ENCODE measurements at regions of chr4 and their contacts with region 1.

Region 1: GRCh38 chr4:74675673-74676279 is 118.5 kb downstream of the BTC start:
- DNase-seq: peak in 1 of 2 experiments; percentile 71
- H3K4me3 ChIP-seq: no peak overlapping the region
- H3K4me3 Mint-ChIP-seq: peak overlapping the region; percentile 8
- H3K27ac Mint-ChIP-seq: no peak overlapping the region
- H3K4me1 ChIP-seq: peaks cover 3% of the 10 kb centered on the region
- H3K4me1 Mint-ChIP-seq: peaks cover 14% of the 10 kb centered on the region
- H3K27me3 ChIP-seq: no peaks in the 10 kb centered on the region
- H3K27me3 Mint-ChIP-seq: no peaks in the 10 kb centered on the region
- CTCF ChIP-seq: peak; percentile 62 to 79

Region 2: DNA sequence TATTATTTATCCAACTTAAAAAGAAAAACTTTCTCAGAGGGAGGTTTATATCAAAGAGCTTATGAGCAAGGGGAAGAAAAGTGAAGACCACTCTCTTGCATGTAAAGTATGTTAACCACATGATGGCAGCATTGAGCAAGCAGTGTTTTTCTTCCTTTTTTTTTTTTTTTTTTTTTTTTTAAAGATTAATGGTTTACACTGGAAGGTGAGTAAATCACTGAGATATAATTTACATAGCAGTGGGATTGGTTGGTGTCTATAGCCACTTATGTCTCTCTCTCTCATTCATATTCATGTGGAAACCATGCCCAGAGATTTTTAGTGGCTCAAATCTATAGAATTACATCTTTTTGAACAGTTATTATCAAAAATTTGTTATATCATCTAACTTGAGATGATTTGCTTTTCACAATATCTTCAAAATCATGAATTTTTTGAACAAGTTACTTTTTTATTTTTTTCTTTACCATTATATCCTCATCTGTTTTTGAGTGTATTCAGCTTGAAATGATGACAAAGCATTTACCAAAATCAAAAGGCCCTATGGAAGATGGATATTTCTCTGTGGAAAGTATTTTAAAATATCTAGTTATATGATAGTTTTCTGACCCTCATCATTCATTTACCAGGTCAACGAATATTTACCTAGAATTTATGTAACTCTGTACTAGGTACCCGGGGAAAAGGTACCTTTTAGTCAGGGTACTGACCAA is 486.3 kb before region 1 on chr4:
- CTCF ChIA-PET with region 1: interaction called, 4 read pairs
- POLR2A ChIA-PET with region 1: no interaction called
- intact Hi-C with region 1: loop called (anchors 5 kb)
- DNase-seq: peak in 1 of 2 experiments; percentile 45
- H3K4me3 ChIP-seq: no peak overlapping the region
- H3K4me3 Mint-ChIP-seq: no peak overlapping the region
- H3K27ac Mint-ChIP-seq: no peak overlapping the region
- H3K4me1 ChIP-seq: no peaks in the 10 kb centered on the region; the same call in 1 of the 2 replicates
- H3K4me1 Mint-ChIP-seq: no peaks in the 10 kb centered on the region
- H3K27me3 ChIP-seq: no peaks in the 10 kb centered on the region
- H3K27me3 Mint-ChIP-seq: no peaks in the 10 kb centered on the region
- CTCF ChIP-seq: peak; percentile 59 to 64

Region 3: GRCh38 chr4:74228691-74229640 is 446.8 kb before region 1 on chr4:
- CTCF ChIA-PET with region 1: interaction called, 6 read pairs
- POLR2A ChIA-PET with region 1: no interaction called
- intact Hi-C with region 1: loop called (anchors 1 kb)
- DNase-seq: peak; percentile 77 to 83
- H3K4me3 ChIP-seq: no peak overlapping the region
- H3K4me3 Mint-ChIP-seq: no peak overlapping the region
- H3K27ac Mint-ChIP-seq: no peak overlapping the region
- H3K4me1 ChIP-seq: no peaks in the 10 kb centered on the region
- H3K4me1 Mint-ChIP-seq: no peaks in the 10 kb centered on the region
- H3K27me3 ChIP-seq: no peaks in the 10 kb centered on the region
- H3K27me3 Mint-ChIP-seq: no peaks in the 10 kb centered on the region
- CTCF ChIP-seq: peak; percentile 61 to 73

Region 4: GRCh38 chr4:74320559-74321118 is 355.1 kb before region 1 on chr4:
- CTCF ChIA-PET with region 1: interaction called, 16 read pairs
- POLR2A ChIA-PET with region 1: no interaction called
- intact Hi-C with region 1: loop called (anchors 1 kb)
- DNase-seq: peak; percentile 66 to 72
- H3K4me3 ChIP-seq: no peak overlapping the region
- H3K4me3 Mint-ChIP-seq: peak overlapping the region; percentile 1
- H3K27ac Mint-ChIP-seq: no peak overlapping the region
- H3K4me1 ChIP-seq: peaks cover 17% of the 10 kb centered on the region; the same call in 1 of the 2 replicates
- H3K4me1 Mint-ChIP-seq: peaks cover 10% of the 10 kb centered on the region
- H3K27me3 ChIP-seq: no peaks in the 10 kb centered on the region
- H3K27me3 Mint-ChIP-seq: no peaks in the 10 kb centered on the region
- CTCF ChIP-seq: peak; percentile 48 to 66

Region 5: DNA sequence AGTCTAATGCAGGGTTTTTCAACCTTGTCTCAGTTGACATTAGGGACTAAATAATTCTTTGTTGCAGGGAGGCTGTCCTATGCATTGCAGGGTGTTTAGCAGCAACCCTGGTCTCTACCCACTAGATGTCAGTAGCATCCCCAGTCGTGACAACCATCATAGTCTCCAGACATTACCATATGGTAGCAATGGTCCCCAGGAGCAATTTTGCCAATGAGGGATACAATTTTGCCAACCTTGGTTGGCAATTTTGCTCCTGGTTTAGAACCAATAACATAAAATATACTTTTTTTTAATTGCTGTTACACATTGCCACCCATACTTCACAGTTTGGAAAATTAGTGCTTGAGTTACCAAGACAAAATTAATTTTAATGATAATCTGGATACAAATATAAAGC is 304.9 kb before region 1 on chr4:
- CTCF ChIA-PET with region 1: interaction called, 29 read pairs
- POLR2A ChIA-PET with region 1: interaction called, 3 read pairs
- intact Hi-C with region 1: loop called (anchors 1 kb)
- DNase-seq: peak; percentile 68 to 69
- H3K4me3 ChIP-seq: no peak overlapping the region
- H3K4me3 Mint-ChIP-seq: no peak overlapping the region
- H3K27ac Mint-ChIP-seq: no peak overlapping the region
- H3K4me1 ChIP-seq: peaks cover 15% of the 10 kb centered on the region; the same call in 1 of the 2 replicates
- H3K4me1 Mint-ChIP-seq: peaks cover 17% of the 10 kb centered on the region
- H3K27me3 ChIP-seq: no peaks in the 10 kb centered on the region
- H3K27me3 Mint-ChIP-seq: no peaks in the 10 kb centered on the region
- CTCF ChIP-seq: peak; percentile 73 to 81

Region 6: GRCh38 chr4:74376888-74377483 is 298.8 kb before region 1 on chr4:
- CTCF ChIA-PET with region 1: interaction called, 29 read pairs
- POLR2A ChIA-PET with region 1: no interaction called
- intact Hi-C with region 1: loop called (anchors 1 kb)
- DNase-seq: peak in 1 of 2 experiments; percentile 30
- H3K4me3 ChIP-seq: no peak overlapping the region
- H3K4me3 Mint-ChIP-seq: no peak overlapping the region
- H3K27ac Mint-ChIP-seq: no peak overlapping the region
- H3K4me1 ChIP-seq: peaks cover 41% of the 10 kb centered on the region
- H3K4me1 Mint-ChIP-seq: peaks cover 9% of the 10 kb centered on the region
- H3K27me3 ChIP-seq: no peaks in the 10 kb centered on the region
- H3K27me3 Mint-ChIP-seq: no peaks in the 10 kb centered on the region
- CTCF ChIP-seq: peak; percentile 44 to 55

Region 7: GRCh38 chr4:74444891-74445642 is 230.7 kb before region 1 on chr4 and contains the start of gene AREG:
- CTCF ChIA-PET with region 1: interaction called, 7 read pairs
- POLR2A ChIA-PET with region 1: interaction called, 3 read pairs
- intact Hi-C with region 1: loop called (anchors 2 kb)
- DNase-seq: peak; percentile 85 to 88
- H3K4me3 ChIP-seq: peak within 1 kb of the TSS; percentile 82
- H3K4me3 Mint-ChIP-seq: peak within 1 kb of the TSS; percentile 86
- H3K27ac Mint-ChIP-seq: peak within 1 kb of the TSS; percentile 73
- H3K4me1 ChIP-seq: peaks cover 8% of the 10 kb centered on the region
- H3K4me1 Mint-ChIP-seq: peaks cover 6% of the 10 kb centered on the region
- H3K27me3 ChIP-seq: no peaks in the 10 kb centered on the region
- H3K27me3 Mint-ChIP-seq: no peaks in the 10 kb centered on the region
- CTCF ChIP-seq: peak; percentile 43 to 68
- total RNA-seq, gene AREG: 146 and 162 TPM in 2 replicates

Region 8: GRCh38 chr4:74608151-74608949 is 67.4 kb before region 1 on chr4:
- CTCF ChIA-PET with region 1: no interaction called
- POLR2A ChIA-PET with region 1: no interaction called
- intact Hi-C with region 1: no loop called
- DNase-seq: peak; percentile 46 to 51
- H3K4me3 ChIP-seq: no peak overlapping the region
- H3K4me3 Mint-ChIP-seq: peak overlapping the region; percentile 48
- H3K27ac Mint-ChIP-seq: peak overlapping the region; percentile 9
- H3K4me1 ChIP-seq: peaks cover 56% of the 10 kb centered on the region
- H3K4me1 Mint-ChIP-seq: peaks cover 42% of the 10 kb centered on the region
- H3K27me3 ChIP-seq: no peaks in the 10 kb centered on the region
- H3K27me3 Mint-ChIP-seq: no peaks in the 10 kb centered on the region
- CTCF ChIP-seq: no peak

Region 9: DNA sequence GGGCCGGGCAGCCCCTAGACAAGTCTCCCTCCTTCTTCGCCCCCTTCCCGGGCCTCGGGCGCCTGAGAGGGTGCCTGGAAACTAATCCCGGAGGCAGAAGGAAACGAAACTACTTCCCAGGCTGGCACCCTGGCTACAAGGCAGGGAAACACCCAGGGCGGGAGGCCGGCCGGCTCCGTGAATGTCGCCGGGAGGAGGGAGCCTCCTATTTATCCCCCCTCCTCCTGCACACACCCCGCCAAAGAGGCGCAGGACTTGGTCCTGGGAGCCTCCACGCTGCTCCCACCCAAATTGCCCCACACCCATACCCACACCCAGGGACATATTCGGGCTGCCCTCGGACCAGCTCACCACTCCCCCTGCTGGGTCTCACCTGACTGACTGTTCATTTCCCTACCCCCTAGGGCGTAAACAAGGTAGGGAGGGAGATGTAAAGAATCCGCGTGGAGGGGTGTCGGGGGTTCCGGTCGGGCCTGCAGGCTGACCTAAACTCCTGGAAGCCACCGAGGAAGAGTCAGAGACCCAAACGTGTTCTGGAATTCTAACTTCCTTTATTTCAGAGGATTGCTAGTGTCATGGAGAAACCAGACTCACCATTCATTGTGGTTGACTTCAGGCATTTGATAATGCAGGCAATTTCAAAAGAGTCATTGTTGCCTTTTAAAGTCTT is 118.7 kb after region 1 on chr4 and contains the start of gene BTC:
- CTCF ChIA-PET with region 1: no interaction called
- POLR2A ChIA-PET with region 1: no interaction called
- intact Hi-C with region 1: no loop called
- DNase-seq: peak; percentile 63 to 69
- H3K4me3 ChIP-seq: peak within 1 kb of the TSS; percentile 43
- H3K4me3 Mint-ChIP-seq: peak within 1 kb of the TSS; percentile 89
- H3K27ac Mint-ChIP-seq: peak within 1 kb of the TSS; percentile 54
- H3K4me1 ChIP-seq: no peaks in the 10 kb centered on the region
- H3K4me1 Mint-ChIP-seq: peaks cover 7% of the 10 kb centered on the region
- H3K27me3 ChIP-seq: 0 out of 2 replicates have a peak, but pooled peaks cover 1% of the 10 kb centered on the region
- H3K27me3 Mint-ChIP-seq: peaks cover 31% of the 10 kb centered on the region
- CTCF ChIP-seq: peak; percentile 54 to 63
- total RNA-seq, gene BTC: 0.09 and 0.14 TPM in 2 replicates